ENCODE measurements at regions of chr10 and their contacts with region 1.

Region 1: DNA sequence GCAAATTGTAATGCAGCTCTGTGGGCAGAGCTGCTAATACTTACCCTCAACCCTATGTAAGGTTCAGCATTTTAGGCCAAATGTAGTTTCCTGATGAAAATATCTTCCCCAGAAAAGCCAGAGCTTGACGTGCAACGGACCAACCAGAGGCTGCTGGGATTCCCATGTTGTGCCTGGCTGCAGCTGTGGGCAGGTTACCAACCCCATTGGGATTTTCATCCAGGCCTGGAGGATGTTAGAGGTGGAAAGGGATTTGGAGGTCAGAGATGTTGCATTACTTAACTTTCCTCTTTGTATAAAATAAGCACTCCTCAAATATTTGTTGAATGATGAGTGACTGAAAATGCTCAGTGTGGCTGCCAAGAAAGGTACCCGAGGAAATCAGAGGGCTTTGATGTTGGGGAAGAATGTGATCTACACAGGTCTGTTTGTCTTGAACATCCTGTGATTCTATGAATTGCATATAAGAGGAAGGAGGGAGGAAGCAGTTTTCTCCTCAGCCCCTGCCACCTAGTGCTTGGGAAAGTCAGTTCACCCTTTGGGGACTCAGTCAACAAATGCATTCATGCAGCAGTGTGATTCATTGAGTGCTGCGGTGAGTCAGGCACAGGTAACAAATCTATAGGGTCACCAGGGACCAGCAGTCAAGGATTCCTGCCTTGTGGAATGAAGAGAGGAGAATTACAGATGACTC is 487.2 kb downstream of the RPS24 start:
- DNase-seq: peak in 6 of 9 donors; percentile 9 to 60 (median 32)
- ATAC-seq: peak; percentile 75
- H3K4me3 ChIP-seq: no peak overlapping the region
- H3K4me3 Mint-ChIP-seq: peak overlapping the region in 1 of 10 donors; percentile 4
- H3K27ac ChIP-seq: no peak overlapping the region
- H3K27ac Mint-ChIP-seq: peak overlapping the region in 6 of 9 donors; percentile 11 to 68 (median 44)
- H3K4me1 ChIP-seq: peaks cover 0 to 4% of the 10 kb centered on the region in 2 donors
- H3K4me1 Mint-ChIP-seq: peaks cover 8 to 15% (median 9%) of the 10 kb centered on the region in 7 donors
- H3K27me3 ChIP-seq: no peaks in the 10 kb centered on the region
- H3K27me3 Mint-ChIP-seq: no peaks in the 10 kb centered on the region

Region 2: DNA sequence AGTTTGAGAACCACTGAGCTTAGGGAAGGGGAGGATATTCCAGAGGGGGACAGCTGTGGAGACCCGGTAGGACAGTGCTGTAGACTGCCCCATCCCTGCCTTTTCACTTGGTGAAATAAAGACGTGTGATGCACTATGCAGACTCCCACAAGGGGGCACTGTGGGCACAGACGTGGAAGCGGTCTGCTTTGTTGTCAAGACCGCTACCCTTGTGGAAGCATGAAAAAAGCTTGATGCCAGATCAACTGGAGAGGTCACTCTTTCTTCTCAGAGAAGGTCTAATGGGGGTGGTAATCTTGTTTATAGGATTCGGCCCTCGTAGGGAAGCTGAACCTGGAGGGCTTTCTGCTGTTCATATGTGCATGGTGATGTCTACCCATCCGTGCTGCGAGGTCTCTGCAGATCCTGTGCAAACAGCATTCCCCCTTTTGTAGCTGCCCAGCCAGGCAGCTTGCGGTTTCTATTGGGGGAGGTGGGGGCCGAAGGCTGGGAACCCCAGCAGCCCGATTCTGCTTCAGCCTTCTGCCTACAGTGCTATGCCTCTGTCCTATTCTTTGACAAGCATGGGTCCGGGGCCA is 473.5 kb before region 1 on chr10:
- CTCF ChIA-PET with region 1: no interaction called
- POLR2A ChIA-PET with region 1: no interaction called
- intact Hi-C with region 1: loop called (anchors 1 to 2 kb)
- DNase-seq: peak; percentile 65 to 80 (median 74)
- ATAC-seq: peak; percentile 92
- H3K4me3 ChIP-seq: no peak overlapping the region
- H3K4me3 Mint-ChIP-seq: peak overlapping the region in 2 of 10 donors; percentile 11 to 27
- H3K27ac ChIP-seq: no peak overlapping the region
- H3K27ac Mint-ChIP-seq: peak overlapping the region in 2 of 9 donors; percentile 4 to 9
- H3K4me1 ChIP-seq: no peaks in the 10 kb centered on the region
- H3K4me1 Mint-ChIP-seq: peaks cover 5 to 26% (median 16%) of the 10 kb centered on the region in 7 donors
- H3K27me3 ChIP-seq: no peaks in the 10 kb centered on the region
- H3K27me3 Mint-ChIP-seq: no peaks in the 10 kb centered on the region

Region 3: GRCh38 chr10:78532480-78533042 is 11.7 kb after region 1 on chr10:
- CTCF ChIA-PET with region 1: no interaction called
- POLR2A ChIA-PET with region 1: no interaction called
- intact Hi-C with region 1: no loop called
- DNase-seq: no peak
- ATAC-seq: peak; percentile 16
- H3K4me3 ChIP-seq: no peak overlapping the region
- H3K4me3 Mint-ChIP-seq: peak overlapping the region in 2 of 10 donors; percentile 18 to 36
- H3K27ac ChIP-seq: no peak overlapping the region
- H3K27ac Mint-ChIP-seq: peak overlapping the region in 7 of 9 donors; percentile 6 to 86 (median 63)
- H3K4me1 ChIP-seq: no peaks in the 10 kb centered on the region
- H3K4me1 Mint-ChIP-seq: peaks cover 0 to 14% (median 4%) of the 10 kb centered on the region in 7 donors
- H3K27me3 ChIP-seq: no peaks in the 10 kb centered on the region
- H3K27me3 Mint-ChIP-seq: peaks cover 0 to 6% (median 0%) of the 10 kb centered on the region in 5 donors

Region 4: GRCh38 chr10:78892293-78893176 is 371.7 kb after region 1 on chr10:
- CTCF ChIA-PET with region 1: no interaction called
- POLR2A ChIA-PET with region 1: no interaction called
- intact Hi-C with region 1: no loop called
- DNase-seq: no peak
- ATAC-seq: no peak
- H3K4me3 ChIP-seq: no peak overlapping the region
- H3K4me3 Mint-ChIP-seq: no peak overlapping the region
- H3K27ac ChIP-seq: no peak overlapping the region
- H3K27ac Mint-ChIP-seq: peak overlapping the region in 1 of 9 donors; percentile 60
- H3K4me1 ChIP-seq: no peaks in the 10 kb centered on the region
- H3K4me1 Mint-ChIP-seq: peaks cover 0 to 7% (median 3%) of the 10 kb centered on the region in 7 donors
- H3K27me3 ChIP-seq: no peaks in the 10 kb centered on the region
- H3K27me3 Mint-ChIP-seq: peaks cover 0 to 12% (median 0%) of the 10 kb centered on the region in 5 donors

Measured in naive thymus-derived CD4-positive, alpha-beta T cell (primary cell).